Calu3 (cell line): ENCODE measurements at regions of chr6 and their contacts with region 1.

Region 1: DNA sequence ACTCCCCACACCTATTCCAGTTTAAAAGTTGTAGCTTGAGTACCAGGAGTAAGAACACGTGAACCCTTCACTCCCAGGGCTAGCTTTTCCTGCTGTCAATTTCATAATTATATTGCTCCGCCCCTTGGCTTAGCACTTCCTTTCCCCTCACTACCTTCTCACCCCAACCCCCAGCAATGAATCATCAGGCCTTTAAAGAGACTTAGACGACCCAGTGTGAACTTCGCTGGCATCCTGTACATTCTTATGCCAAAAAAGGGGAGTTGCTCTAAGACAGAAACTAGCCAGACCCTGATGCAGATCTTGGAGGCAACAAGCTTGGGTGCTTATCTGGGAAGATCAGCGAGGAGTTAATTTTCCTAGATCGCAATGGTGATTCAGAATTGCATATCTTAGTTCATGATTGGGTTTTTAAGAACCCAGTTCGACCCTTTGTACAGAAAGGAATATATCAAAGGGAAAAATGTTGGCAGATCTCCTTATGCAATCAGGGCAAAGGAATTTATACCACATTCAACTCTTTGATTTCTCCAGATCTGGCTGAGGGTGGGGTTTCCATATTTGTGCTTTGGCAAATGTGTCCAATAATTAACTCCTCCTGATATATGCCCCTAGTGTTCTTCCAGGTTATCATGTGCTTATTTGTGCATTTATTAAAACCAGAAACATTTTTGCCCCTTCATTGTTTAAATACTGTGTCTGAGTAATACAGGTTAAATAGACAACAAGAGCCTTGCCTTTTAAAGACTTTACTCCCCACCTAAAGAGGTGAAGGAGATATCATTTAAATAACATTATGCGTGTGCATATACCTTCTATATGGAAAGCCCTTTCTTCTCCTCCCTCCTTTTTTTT is 8.1 kb upstream of the ATXN1 start:
- DNase-seq: peak; percentile 79
- H3K4me3 Mint-ChIP-seq: peak overlapping the region; percentile 43
- H3K27ac Mint-ChIP-seq: peak overlapping the region; percentile 74
- H3K4me1 Mint-ChIP-seq: peaks cover 41% of the 10 kb centered on the region
- H3K27me3 Mint-ChIP-seq: no peaks in the 10 kb centered on the region
- CTCF ChIP-seq: no peak

Region 2: DNA sequence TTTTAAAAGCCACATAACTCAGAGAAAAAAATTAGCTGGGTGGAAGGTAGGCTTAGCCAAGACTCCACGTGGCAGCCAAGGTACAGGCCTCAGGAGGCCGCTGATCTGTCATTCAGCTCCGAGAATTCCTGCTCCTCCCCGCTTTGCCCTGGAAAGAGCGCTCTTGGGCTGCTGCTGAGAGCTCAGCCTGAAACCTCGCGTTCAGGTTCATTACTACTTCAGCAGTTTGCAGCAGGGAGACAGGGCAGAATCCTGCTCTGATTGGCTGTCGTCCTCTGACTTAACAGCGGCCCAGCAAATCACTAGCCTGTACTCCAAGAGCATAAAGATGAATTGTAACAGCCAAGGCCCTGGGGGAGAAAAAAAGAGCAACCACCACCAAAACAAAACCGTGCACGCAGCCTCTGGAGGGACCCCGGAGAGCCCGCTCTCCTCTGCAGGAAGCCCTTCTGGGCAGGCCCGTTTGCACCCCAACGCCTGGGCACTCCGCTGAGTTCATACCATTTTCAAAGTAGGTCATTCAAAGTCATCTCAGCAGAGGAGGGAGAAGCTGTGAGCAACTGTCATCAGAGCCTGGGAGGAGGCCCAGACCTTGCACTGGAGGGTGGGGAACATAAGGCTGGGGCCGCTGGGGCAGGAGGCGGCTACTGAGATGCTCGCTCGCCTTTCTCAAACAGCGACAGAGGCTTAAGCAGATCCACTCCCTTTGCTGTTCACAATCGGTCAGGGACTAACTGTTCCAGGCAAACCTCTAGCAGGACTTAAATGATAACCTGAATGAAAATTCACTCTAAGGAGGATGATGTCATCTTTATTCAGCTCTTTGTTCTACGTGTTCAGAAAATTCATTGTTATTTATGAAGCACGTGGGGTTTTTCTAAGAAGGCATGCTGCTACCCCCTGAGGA is 34.2 kb after region 1 on chr6:
- CTCF ChIA-PET with region 1: no interaction called
- intact Hi-C with region 1: no loop called
- DNase-seq: no peak
- H3K4me3 Mint-ChIP-seq: no peak overlapping the region
- H3K27ac Mint-ChIP-seq: no peak overlapping the region
- H3K4me1 Mint-ChIP-seq: peaks cover 28% of the 10 kb centered on the region
- H3K27me3 Mint-ChIP-seq: no peaks in the 10 kb centered on the region
- CTCF ChIP-seq: no peak

Region 3: DNA sequence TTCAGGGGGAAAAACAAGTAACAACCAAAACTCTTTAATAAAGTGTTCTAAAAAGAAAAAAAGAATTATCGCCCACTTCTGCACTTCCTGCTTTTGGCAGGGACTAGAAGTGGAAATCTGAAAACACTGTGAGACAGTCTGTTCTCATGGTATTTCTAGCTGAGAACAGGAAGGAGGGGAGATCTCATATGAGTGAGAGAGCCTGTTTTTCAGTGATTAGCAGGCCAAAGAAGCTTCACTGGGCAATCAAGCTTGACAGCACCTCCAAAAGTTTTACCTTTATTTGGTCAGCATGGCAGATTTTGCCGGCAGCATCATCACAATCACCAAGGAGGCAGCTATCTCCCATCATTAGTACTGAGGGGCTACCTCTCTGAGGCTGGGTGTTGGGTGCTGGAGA is 71.4 kb after region 1 on chr6:
- CTCF ChIA-PET with region 1: interaction called, 6 read pairs
- intact Hi-C with region 1: loop called (anchors 5 kb)
- DNase-seq: no peak
- H3K4me3 Mint-ChIP-seq: peak overlapping the region; percentile 58
- H3K27ac Mint-ChIP-seq: peak overlapping the region; percentile 93
- H3K4me1 Mint-ChIP-seq: peaks cover 24% of the 10 kb centered on the region
- H3K27me3 Mint-ChIP-seq: no peaks in the 10 kb centered on the region
- CTCF ChIP-seq: no peak

Region 4: DNA sequence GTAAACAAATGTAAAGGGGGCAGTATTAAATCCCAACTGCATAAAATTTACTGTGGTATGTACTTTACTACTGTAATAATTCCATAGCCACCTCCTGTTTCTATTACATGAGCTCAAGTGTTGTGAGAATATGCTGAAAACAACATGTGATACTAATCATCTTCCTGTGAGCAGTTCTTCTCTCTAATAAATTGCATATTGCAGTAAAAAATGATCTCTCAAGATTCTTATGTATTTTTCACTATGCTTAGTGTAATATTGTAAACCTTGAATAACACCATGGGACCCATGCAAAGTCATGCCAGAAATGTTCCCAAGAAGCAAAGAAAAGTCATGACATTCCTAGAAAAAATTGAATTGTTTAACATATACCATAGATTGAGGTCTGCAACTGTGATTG is 124.9 kb after region 1 on chr6:
- CTCF ChIA-PET with region 1: no interaction called
- intact Hi-C with region 1: no loop called
- DNase-seq: no peak
- H3K4me3 Mint-ChIP-seq: no peak overlapping the region
- H3K27ac Mint-ChIP-seq: no peak overlapping the region
- H3K4me1 Mint-ChIP-seq: peaks cover 8% of the 10 kb centered on the region
- H3K27me3 Mint-ChIP-seq: no peaks in the 10 kb centered on the region
- CTCF ChIP-seq: no peak

Region 5: DNA sequence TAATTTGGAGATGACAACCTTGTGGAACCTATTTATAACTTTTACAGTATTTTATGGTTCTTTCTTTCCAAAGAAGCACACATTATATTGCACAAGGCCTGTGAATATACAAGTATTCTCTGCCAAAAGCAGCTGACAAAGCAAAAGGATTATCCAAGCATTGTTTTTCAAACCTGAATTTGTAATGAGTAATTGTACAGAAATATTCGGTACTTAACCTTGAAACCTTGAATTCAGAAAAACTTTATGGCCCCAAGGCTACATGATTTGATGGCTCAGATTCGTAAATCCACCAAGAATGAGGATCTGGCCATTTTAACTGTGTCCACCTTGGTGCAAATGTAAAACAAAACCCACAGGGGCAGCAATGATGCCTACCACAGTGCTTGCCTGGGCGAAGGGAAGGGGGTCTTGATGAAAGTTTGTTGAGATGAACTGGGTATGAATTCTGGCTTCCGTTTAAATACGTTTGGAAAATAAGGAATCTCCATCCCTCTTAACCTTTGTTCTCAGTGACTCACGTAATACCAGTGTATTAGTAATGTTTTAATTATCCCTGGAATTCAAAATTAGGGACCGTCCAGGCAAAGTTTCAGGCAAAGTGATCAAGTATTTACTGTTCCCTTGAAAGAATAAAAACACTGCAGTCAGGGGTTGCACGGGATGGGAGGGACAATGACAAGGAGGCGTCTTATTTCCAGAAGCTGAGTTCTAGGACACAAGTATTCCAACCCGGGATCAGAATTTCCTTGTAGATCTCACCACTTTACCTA is 509.1 kb after region 1 on chr6:
- CTCF ChIA-PET with region 1: no interaction called
- intact Hi-C with region 1: no loop called
- DNase-seq: no peak
- H3K4me3 Mint-ChIP-seq: no peak overlapping the region
- H3K27ac Mint-ChIP-seq: peak overlapping the region; percentile 67
- H3K4me1 Mint-ChIP-seq: peaks cover 13% of the 10 kb centered on the region
- H3K27me3 Mint-ChIP-seq: no peaks in the 10 kb centered on the region
- CTCF ChIP-seq: no peak